AG04450 (cell line): ENCODE measurements at regions of chr2 and their contacts with region 1.

Region 1: DNA sequence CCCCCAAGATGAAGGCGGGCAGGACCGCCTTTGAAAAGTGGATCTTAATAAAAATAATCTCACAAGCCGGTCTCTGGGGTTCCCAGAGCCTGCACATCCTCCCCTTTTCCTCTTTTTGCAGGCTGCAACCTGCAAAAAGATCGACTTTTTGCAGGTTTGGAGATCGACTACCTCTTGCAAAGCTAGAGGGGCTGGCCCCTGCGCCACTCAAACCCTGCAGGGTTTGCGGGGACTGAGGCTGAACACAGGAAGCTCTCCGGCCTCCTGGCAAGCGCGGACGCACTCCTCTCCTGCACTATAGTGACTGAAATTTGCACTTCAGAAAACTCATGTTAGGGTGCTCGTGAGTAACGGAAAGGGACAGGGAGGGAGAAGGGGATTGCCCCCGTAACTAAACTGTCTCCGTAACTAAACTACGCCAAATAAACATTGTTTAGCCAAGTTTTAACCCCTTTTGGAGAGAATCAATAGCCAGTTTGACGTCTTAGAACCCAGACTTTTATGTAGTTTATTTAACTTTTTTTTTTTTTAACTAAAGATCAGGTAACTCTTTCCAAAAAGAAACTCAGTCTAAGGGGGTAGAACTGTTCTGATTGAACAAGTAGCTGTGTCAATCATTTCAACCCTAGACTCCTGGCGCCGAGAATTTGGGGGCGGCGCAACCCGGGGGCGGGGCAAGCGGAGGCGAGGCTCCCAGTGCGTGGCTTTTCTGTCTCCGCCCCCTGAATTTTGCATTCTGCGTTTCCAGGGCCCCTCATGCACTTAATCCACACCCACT is 2.5 kb downstream of the IGFBP5 start:
- DNase-seq: no peak
- H3K4me3 ChIP-seq: peak overlapping the region; percentile 93
- H3K27ac ChIP-seq: peak overlapping the region; percentile 75
- H3K27me3 ChIP-seq: no peaks in the 10 kb centered on the region
- CTCF ChIP-seq: no peak

Region 2: GRCh38 chr2:216775043-216775453 is 82.2 kb after region 1 on chr2:
- CTCF ChIA-PET with region 1: interaction called, 4 read pairs
- POLR2A ChIA-PET with region 1: interaction called, 11 read pairs
- DNase-seq: peak; percentile 91
- H3K4me3 ChIP-seq: peak overlapping the region; percentile 20; the same call in 1 of the 2 replicates
- H3K27ac ChIP-seq: peak overlapping the region; percentile 94
- H3K27me3 ChIP-seq: no peaks in the 10 kb centered on the region
- CTCF ChIP-seq: no peak; the same call in 1 of the 2 replicates

Region 3: DNA sequence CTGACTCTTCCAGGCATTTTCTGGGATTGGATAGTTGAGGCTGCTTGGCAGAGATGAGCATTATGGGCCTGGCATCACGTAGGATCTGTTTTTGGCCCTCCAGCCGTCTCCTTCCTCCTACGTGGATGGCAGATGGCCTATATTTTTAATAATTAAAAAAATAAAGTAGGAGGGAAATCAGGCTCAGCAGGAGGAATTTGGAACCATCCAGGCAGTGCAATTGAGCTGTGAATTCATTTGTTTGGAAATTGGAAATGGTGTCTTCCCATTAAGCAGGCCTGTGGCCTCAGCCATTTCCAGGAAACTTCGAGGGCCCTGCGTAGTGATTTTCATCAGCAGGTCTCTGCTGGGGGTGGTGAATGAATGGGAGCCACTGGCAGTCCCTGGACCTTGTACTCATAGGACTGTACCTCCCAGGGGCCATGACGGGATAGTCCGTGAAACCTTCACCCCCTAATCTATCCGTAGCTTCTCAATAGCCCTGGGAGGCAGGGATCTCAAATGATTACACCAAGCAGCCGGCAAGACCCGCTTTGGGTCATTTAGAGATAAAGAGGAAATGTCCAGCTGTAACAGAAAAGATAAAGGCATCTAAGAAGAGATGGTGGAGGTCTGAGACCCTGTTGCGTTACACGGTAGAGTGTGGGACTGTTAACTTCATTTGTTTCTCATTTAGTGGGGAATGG is 240.2 kb after region 1 on chr2:
- CTCF ChIA-PET with region 1: no interaction called
- POLR2A ChIA-PET with region 1: no interaction called
- DNase-seq: no peak
- H3K4me3 ChIP-seq: no peak overlapping the region
- H3K27ac ChIP-seq: no peak overlapping the region
- H3K27me3 ChIP-seq: no peaks in the 10 kb centered on the region
- CTCF ChIP-seq: no peak

Region 4: GRCh38 chr2:217105733-217106649 is 413.2 kb after region 1 on chr2:
- CTCF ChIA-PET with region 1: interaction called, 6 read pairs
- POLR2A ChIA-PET with region 1: interaction called, 16 read pairs
- DNase-seq: peak; percentile 81
- H3K4me3 ChIP-seq: no peak overlapping the region
- H3K27ac ChIP-seq: peak overlapping the region; percentile 87
- H3K27me3 ChIP-seq: no peaks in the 10 kb centered on the region
- CTCF ChIP-seq: no peak

Region 5: GRCh38 chr2:217338306-217338916 is 645.6 kb after region 1 on chr2:
- CTCF ChIA-PET with region 1: no interaction called
- POLR2A ChIA-PET with region 1: interaction called, 30 read pairs
- DNase-seq: peak; percentile 89
- H3K4me3 ChIP-seq: no peak overlapping the region
- H3K27ac ChIP-seq: peak overlapping the region; percentile 50
- H3K27me3 ChIP-seq: no peaks in the 10 kb centered on the region
- CTCF ChIP-seq: no peak